Activated CD8-positive, alpha-beta T cell treated with anti-CD3 and anti-CD28 coated beads for 36 hours (primary cell): ENCODE measurements at regions of chr17 and their contacts with region 1.

Region 1: GRCh38 chr17:3710951-3711383 is 12.7 kb upstream of the HASPIN start:
- DNase-seq: peak; percentile 89
- ATAC-seq: peak; percentile 96
- H3K4me3 Mint-ChIP-seq: peak overlapping the region; percentile 31
- H3K27ac Mint-ChIP-seq: peak overlapping the region; percentile 83
- H3K4me1 Mint-ChIP-seq: peaks cover 52% of the 10 kb centered on the region
- H3K27me3 Mint-ChIP-seq: no peaks in the 10 kb centered on the region
- CTCF ChIP-seq: no peak

Region 2: GRCh38 chr17:3695723-3696411 is 15.1 kb before region 1 on chr17 and contains the start of gene P2RX5:
- CTCF ChIA-PET with region 1: interaction called, 6 read pairs
- POLR2A ChIA-PET with region 1: interaction called, 75 read pairs
- intact Hi-C with region 1: no loop called
- DNase-seq: peak; percentile 60
- ATAC-seq: peak; percentile 60
- H3K4me3 Mint-ChIP-seq: peak within 1 kb of the TSS; percentile 87
- H3K27ac Mint-ChIP-seq: peak within 1 kb of the TSS; percentile 93
- H3K4me1 Mint-ChIP-seq: peaks cover 22% of the 10 kb centered on the region
- H3K27me3 Mint-ChIP-seq: no peaks in the 10 kb centered on the region
- CTCF ChIP-seq: no peak
- total RNA-seq, gene P2RX5: 35.7 to 39.5 TPM

Region 3: GRCh38 chr17:3723556-3724369 is 12.8 kb after region 1 on chr17 and contains the start of gene HASPIN:
- CTCF ChIA-PET with region 1: interaction called, 33 read pairs
- POLR2A ChIA-PET with region 1: interaction called, 10 read pairs
- intact Hi-C with region 1: no loop called
- DNase-seq: peak; percentile 93
- ATAC-seq: peak; percentile 91
- H3K4me3 Mint-ChIP-seq: peak within 1 kb of the TSS; percentile 81
- H3K27ac Mint-ChIP-seq: peak within 1 kb of the TSS; percentile 92
- H3K4me1 Mint-ChIP-seq: peaks cover 54% of the 10 kb centered on the region
- H3K27me3 Mint-ChIP-seq: no peaks in the 10 kb centered on the region
- CTCF ChIP-seq: peak; percentile 42
- total RNA-seq, gene HASPIN: 20.7 to 21.3 TPM

Region 4: DNA sequence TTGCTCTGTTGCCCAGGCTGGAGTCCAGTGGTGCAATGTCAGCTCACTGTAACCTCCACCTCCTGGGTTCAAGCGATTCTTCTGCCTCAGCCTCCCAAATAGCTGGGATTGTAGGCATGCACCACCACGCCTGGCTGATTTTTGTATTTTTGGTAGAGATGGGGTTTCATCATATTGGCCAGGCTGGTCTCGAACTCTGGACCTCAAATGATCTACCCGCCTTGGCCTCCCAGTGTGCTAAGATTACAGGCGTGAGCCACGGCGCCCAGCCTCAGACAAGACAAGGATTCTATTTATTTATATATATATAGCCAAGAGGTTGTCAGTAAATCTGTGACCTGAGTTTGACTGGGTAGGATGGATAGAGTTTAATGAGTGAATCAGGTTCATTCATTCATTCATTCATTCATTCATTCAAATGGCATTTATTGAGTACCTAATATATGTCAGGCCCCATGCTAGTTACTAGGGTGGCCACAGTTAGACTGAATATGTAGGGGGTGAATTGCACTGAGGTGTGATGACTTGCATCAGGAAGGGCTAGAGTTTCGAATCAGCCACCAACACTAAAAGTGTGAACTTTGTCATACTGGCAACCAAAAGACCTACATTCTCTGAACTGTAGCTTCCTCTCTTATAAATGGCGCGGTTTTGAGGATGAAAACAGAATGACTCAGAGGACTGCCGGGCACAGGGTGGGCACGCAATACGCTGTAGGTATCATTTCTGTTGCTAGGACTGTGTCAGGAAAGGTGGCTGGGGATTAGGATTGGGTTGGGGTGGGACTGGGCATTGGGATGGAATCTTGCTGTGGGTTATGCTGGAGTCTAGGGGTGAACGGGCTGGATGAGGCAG is 52.2 kb after region 1 on chr17:
- CTCF ChIA-PET with region 1: interaction called, 3 read pairs
- POLR2A ChIA-PET with region 1: interaction called, 6 read pairs
- intact Hi-C with region 1: loop called (anchors 10 kb)
- DNase-seq: peak; percentile 79
- ATAC-seq: peak; percentile 67
- H3K4me3 Mint-ChIP-seq: peak overlapping the region; percentile 43
- H3K27ac Mint-ChIP-seq: peak overlapping the region; percentile 97
- H3K4me1 Mint-ChIP-seq: peaks cover 53% of the 10 kb centered on the region
- H3K27me3 Mint-ChIP-seq: peaks cover 6% of the 10 kb centered on the region
- CTCF ChIP-seq: no peak

Region 5: GRCh38 chr17:3870871-3871306 is 159.9 kb after region 1 on chr17:
- CTCF ChIA-PET with region 1: no interaction called
- POLR2A ChIA-PET with region 1: no interaction called
- intact Hi-C with region 1: no loop called
- DNase-seq: no peak
- ATAC-seq: no peak
- H3K4me3 Mint-ChIP-seq: no peak overlapping the region
- H3K27ac Mint-ChIP-seq: peak overlapping the region; percentile 52
- H3K4me1 Mint-ChIP-seq: peaks cover 5% of the 10 kb centered on the region
- H3K27me3 Mint-ChIP-seq: no peaks in the 10 kb centered on the region
- CTCF ChIP-seq: no peak

Region 6: GRCh38 chr17:4019275-4019674 is 308.3 kb after region 1 on chr17:
- CTCF ChIA-PET with region 1: no interaction called
- POLR2A ChIA-PET with region 1: no interaction called
- intact Hi-C with region 1: no loop called
- DNase-seq: no peak
- ATAC-seq: no peak
- H3K4me3 Mint-ChIP-seq: no peak overlapping the region
- H3K27ac Mint-ChIP-seq: no peak overlapping the region
- H3K4me1 Mint-ChIP-seq: no peaks in the 10 kb centered on the region
- H3K27me3 Mint-ChIP-seq: no peaks in the 10 kb centered on the region
- CTCF ChIP-seq: no peak